CD8-positive, alpha-beta T cell (primary cell): ENCODE measurements at regions of chr20 and their contacts with region 1.

Region 1: GRCh38 chr20:7935027-7935551 is 5.2 kb downstream of the HAO1 start:
- DNase-seq: no peak
- ATAC-seq: no peak
- H3K4me3 ChIP-seq: no peak overlapping the region
- H3K4me3 Mint-ChIP-seq: no peak overlapping the region
- H3K27ac ChIP-seq: no peak overlapping the region
- H3K27ac Mint-ChIP-seq: no peak overlapping the region
- H3K4me1 ChIP-seq: no peaks in the 10 kb centered on the region
- H3K4me1 Mint-ChIP-seq: no peaks in the 10 kb centered on the region
- H3K27me3 ChIP-seq: no peaks in the 10 kb centered on the region
- H3K27me3 Mint-ChIP-seq: peaks cover 17% of the 10 kb centered on the region
- CTCF ChIP-seq: no peak

Region 2: GRCh38 chr20:8331740-8332412 is 396.8 kb after region 1 on chr20:
- CTCF ChIA-PET with region 1: no interaction called
- POLR2A ChIA-PET with region 1: no interaction called
- intact Hi-C with region 1: no loop called
- DNase-seq: no peak
- ATAC-seq: no peak
- H3K4me3 ChIP-seq: no peak overlapping the region
- H3K4me3 Mint-ChIP-seq: no peak overlapping the region
- H3K27ac ChIP-seq: no peak overlapping the region
- H3K27ac Mint-ChIP-seq: no peak overlapping the region
- H3K4me1 ChIP-seq: no peaks in the 10 kb centered on the region
- H3K4me1 Mint-ChIP-seq: peaks cover 2% of the 10 kb centered on the region
- H3K27me3 ChIP-seq: no peaks in the 10 kb centered on the region
- H3K27me3 Mint-ChIP-seq: no peaks in the 10 kb centered on the region
- CTCF ChIP-seq: no peak

Region 3: DNA sequence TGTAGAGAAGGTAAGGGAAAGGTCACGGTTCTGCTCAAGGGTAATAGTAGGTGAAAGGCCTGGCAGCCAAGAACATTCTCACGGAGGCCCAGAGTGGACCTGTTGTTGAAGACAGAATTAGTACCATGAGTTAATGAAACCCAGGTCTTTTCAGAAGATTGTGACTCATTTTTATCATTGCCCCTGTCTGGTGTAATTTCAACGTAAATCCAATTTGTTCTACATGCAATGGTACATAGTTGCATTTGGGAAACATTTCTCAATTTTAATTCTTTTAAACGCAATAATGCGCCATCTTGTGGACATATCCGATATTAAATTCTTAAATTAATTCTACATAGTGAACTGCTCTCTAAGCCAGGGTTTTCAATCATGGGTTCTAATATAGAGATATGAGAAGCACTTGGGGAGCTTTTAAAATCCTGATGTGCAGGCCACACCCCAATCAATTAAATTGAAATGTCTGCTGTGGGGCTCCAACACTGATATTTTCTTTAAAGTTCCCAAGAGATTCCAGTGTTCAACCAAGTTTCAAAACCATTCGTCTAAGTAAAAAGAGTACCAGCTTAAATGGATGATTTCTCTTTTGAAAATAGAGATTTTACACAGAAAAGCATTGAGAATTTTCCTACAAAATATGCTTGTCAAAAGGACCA is 454.4 kb after region 1 on chr20:
- CTCF ChIA-PET with region 1: interaction called, 3 read pairs
- POLR2A ChIA-PET with region 1: no interaction called
- intact Hi-C with region 1: loop called in 1 of 2 experiments (anchors 5 kb)
- DNase-seq: peak in 2 of 9 experiments; percentile 52 to 62
- ATAC-seq: peak; percentile 34
- H3K4me3 ChIP-seq: no peak overlapping the region
- H3K4me3 Mint-ChIP-seq: no peak overlapping the region
- H3K27ac ChIP-seq: no peak overlapping the region
- H3K27ac Mint-ChIP-seq: no peak overlapping the region
- H3K4me1 ChIP-seq: no peaks in the 10 kb centered on the region
- H3K4me1 Mint-ChIP-seq: peaks cover 3% of the 10 kb centered on the region
- H3K27me3 ChIP-seq: no peaks in the 10 kb centered on the region
- H3K27me3 Mint-ChIP-seq: no peaks in the 10 kb centered on the region
- CTCF ChIP-seq: peak; percentile 74